Right ventricle myocardium superior (tissue), 1 donor: ENCODE measurements at regions of chr9 and their contacts with region 1.

Region 1: GRCh38 chr9:125143375-125144090 is at the start of gene SCAI:
- DNase-seq: peak; percentile 100
- ATAC-seq: peak; percentile 100
- total RNA-seq, gene SCAI: 3.3 TPM

Region 2: GRCh38 chr9:124370896-124371582 is 772.5 kb before region 1 on chr9:
- intact Hi-C with region 1: no loop called
- DNase-seq: no peak
- ATAC-seq: no peak

Region 3: DNA sequence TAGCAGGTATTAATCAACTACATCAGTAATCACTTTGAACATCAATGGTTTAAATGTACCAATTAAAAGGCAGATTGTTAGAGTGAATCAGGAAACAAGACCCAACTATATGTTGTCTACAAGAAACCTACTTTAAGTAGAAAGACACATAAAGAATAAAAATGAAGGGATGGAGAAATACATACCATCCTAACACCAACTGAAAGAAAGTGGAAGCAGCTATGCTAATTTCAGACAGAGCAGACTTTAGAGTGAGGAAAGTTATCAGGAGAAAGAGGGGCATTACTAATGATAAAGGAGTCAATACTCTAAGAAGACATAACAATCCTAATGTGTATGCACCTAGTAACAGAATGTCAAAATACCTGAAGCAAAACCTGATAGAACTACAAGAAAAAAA is 498.3 kb before region 1 on chr9:
- intact Hi-C with region 1: no loop called
- DNase-seq: no peak
- ATAC-seq: no peak

Region 4: DNA sequence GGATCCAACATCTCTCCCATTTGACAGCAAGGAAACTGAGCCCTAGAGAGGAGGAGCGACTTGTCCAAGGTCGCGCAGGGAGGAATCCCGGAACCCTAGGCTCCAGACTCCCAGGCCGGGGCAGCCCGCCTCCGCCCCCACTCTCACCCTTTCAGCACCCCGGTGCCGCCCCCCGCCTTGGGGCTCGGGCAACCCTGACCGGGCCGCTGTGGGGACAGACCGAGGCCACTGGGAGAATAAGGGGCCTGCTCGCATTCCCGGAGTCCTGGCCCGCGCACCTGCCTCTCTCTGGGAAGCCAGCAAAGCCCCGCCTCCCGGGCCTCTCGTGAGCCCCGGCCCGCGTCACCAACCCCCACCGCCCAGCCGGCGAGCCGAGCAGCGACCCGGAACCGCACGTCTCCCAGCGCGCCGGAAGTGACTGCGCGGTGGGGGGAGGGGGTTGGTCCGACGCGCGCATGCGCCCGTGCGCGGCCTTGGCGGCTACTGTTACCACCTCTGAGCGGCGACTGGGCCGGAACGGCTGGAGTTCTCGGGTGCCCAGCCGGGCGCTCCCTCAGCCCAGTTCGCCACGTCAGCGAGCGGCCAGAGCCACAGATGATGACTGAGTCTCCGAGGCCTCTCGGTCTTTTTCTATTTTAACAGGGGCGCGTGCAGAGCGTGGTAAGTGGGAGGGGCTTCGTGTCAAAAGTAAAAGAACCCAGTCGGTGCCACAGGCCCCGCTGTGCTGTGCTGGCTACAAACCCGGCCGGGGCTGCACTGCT is 202.7 kb before region 1 on chr9 and contains the start of gene GOLGA1:
- intact Hi-C with region 1: loop called (anchors 5 kb)
- DNase-seq: peak; percentile 98
- ATAC-seq: peak; percentile 99
- total RNA-seq, gene GOLGA1: 16.1 TPM

Region 5: GRCh38 chr9:125346080-125346732 is 202.7 kb after region 1 on chr9:
- intact Hi-C with region 1: no loop called
- DNase-seq: no peak
- ATAC-seq: no peak